Breast epithelium (tissue), 4 donors: ENCODE measurements at regions of chr10 and their contacts with region 1.

Region 1: GRCh38 chr10:88854684-88855083 is 3.0 kb upstream of the ANKRD22 start:
- DNase-seq: no peak
- H3K4me3 ChIP-seq: no peak overlapping the region
- H3K27ac ChIP-seq: no peak overlapping the region
- H3K4me1 ChIP-seq: no peaks in the 10 kb centered on the region
- H3K27me3 ChIP-seq: no peaks in the 10 kb centered on the region
- CTCF ChIP-seq: no peak
- POLR2A ChIP-seq: no peak

Region 2: DNA sequence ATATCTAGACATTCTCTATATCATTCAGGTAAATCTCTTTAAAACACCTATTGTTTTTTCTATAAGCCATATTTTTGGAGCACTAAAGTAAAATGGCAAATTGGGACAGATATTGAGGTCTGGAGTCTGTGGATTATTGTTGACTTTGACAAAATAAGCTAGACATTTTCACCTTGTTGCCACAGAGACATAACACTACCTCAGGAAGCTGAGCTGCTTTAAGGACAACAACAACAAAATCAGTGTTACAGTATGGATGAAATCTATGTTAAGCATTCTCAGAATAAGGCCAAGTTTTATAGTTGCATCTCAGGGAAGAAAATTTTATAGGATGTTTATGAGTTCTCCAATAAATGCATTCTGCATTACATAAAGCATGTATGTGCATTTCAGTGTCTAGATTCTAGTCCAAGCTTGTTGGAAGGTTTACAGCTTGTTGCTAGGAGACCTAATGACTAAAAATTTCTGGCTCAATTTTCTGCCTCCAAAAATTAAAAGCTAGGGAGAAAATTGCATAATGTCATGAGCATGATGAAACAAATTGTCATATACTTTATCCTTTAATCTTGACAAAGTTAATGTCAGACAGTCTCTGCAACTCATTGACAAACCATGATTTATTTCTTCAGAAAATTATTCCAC is 33.8 kb before region 1 on chr10:
- intact Hi-C with region 1: no loop called
- DNase-seq: no peak
- H3K4me3 ChIP-seq: no peak overlapping the region
- H3K27ac ChIP-seq: no peak overlapping the region
- H3K4me1 ChIP-seq: no peaks in the 10 kb centered on the region
- H3K27me3 ChIP-seq: no peaks in the 10 kb centered on the region
- CTCF ChIP-seq: no peak
- POLR2A ChIP-seq: no peak

Region 3: DNA sequence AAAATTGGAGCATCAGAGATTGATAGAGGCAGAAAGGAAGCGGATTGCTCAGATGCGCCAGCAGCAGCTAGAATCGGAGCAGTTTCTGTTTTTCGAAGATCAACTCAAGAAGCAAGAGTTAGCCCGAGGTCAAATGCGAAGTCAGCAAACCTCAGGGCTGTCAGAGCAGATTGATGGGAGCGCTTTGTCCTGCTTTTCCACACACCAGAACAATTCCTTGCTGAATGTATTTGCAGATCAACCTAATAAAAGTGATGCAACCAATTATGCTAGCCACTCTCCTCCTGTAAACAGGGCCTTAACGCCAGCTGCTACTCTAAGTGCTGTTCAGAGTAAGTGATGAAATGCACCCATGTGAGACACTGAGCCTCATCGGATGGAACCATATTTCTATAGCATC is 58.4 kb after region 1 on chr10:
- intact Hi-C with region 1: loop called (anchors 2 kb)
- DNase-seq: no peak
- H3K4me3 ChIP-seq: peak overlapping the region in 1 of 3 donors; percentile 26
- H3K27ac ChIP-seq: peak overlapping the region; percentile 14 to 28
- H3K4me1 ChIP-seq: no peaks in the 10 kb centered on the region
- H3K27me3 ChIP-seq: no peaks in the 10 kb centered on the region
- CTCF ChIP-seq: no peak
- POLR2A ChIP-seq: no peak